ENCODE measurements at regions of chr7 and their contacts with region 1.

Region 1: DNA sequence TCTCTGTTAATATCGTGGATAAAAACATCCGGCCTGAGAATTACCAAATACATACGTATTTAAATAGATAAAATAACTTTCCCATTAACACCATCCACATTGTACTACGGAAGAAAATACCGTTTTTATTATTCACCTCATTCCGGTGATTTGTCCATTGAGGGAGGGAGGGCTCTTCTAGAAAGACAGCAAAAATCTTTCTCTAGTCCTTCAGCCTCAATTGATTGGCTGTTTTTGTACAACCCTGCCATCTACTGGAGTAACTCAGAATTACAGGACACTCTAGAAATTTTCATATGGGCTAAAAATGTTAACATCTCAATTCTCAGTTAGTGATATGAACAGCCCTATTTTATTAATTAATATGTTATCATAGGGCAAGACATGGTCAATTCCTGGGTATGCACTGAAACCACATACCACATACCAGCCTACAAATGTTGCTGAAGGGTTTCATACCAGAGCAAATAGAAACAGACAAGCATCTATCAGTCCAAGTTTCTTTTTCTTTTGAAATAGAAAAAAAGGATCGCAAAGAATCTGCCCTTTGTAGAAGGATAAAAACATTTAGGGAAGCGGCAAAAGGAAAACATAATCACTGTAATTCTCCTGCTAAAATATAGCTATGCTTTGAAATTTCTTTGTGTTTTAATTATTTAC is 55.8 kb upstream of the CDCA7L start:
- DNase-seq: peak; percentile 92
- H3K4me3 ChIP-seq: 0 out of 2 replicates have a peak overlapping the region, but pooled peaks have one; percentile 3
- H3K27ac ChIP-seq: 0 out of 2 replicates have a peak overlapping the region, but pooled peaks have one; percentile 3
- H3K4me1 ChIP-seq: peaks cover 12% of the 10 kb centered on the region
- H3K27me3 ChIP-seq: no peaks in the 10 kb centered on the region

Region 2: GRCh38 chr7:20798081-20798693 is 1203.3 kb before region 1 on chr7:
- in situ Hi-C with region 1: loop called (anchors 25 kb)
- DNase-seq: peak; percentile 58
- H3K4me3 ChIP-seq: peak overlapping the region; percentile 63
- H3K27ac ChIP-seq: no peak overlapping the region
- H3K4me1 ChIP-seq: no peaks in the 10 kb centered on the region
- H3K27me3 ChIP-seq: peaks cover 68% of the 10 kb centered on the region

Region 3: GRCh38 chr7:21261627-21262594 is 739.6 kb before region 1 on chr7:
- in situ Hi-C with region 1: loop called (anchors 10 kb)
- DNase-seq: peak; percentile 50
- H3K4me3 ChIP-seq: no peak overlapping the region
- H3K27ac ChIP-seq: no peak overlapping the region
- H3K4me1 ChIP-seq: no peaks in the 10 kb centered on the region
- H3K27me3 ChIP-seq: no peaks in the 10 kb centered on the region